ENCODE measurements at regions of chr19 and their contacts with region 1.

Region 1: DNA sequence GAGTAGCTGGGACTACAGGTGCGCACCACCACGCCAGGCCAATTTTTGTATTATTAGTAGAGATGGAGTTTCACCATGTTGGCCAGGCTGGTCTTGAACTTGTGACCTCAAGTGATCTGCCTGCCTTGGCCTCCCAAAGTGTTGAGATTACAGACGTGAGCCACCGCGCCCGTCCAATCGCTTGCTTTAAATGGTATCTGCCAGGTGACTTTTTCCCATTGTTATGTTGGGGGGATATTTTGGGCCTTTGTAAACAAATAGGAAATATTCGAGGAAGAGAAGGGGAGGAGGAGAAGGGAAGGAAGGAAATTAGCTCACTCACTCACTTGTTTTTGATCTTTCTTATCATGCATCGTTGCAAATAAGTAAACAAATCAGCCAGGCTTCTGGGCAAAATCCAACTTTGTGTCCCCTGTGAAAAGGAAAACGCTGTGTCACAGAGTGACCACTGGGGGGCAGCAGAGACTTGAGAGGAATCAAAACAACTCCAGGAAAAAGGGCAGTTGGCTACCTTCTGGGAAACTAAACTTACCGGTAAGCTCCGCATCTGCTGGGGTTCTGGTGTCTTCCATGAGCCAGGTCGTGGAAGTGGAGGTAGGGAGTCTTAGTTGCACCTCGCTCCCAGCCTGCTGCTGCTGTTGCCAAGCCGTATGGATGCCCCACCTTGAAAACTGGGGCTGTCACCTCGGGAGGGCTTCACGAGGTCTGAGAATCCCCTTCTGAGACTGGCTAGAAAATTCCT is 9.3 kb upstream of the RANBP3 start:
- DNase-seq: peak; percentile 41 to 87
- H3K4me3 ChIP-seq: no peak overlapping the region
- H3K27ac ChIP-seq: no peak overlapping the region
- H3K4me1 ChIP-seq: peaks cover 0 to 5% (median 0%) of the 10 kb centered on the region in 4 experiments; a peak in 4 of 7 replicates
- H3K27me3 ChIP-seq: peaks cover 0 to 3% (median 0%) of the 10 kb centered on the region in 4 experiments; a peak in 3 of 7 replicates
- CTCF ChIP-seq: peak; percentile 55 to 88 (median 88)
- EP300 ChIP-seq: no peak
- POLR2A ChIP-seq: no peak
- RAD21 ChIP-seq: peak; percentile 88 to 90

Region 2: DNA sequence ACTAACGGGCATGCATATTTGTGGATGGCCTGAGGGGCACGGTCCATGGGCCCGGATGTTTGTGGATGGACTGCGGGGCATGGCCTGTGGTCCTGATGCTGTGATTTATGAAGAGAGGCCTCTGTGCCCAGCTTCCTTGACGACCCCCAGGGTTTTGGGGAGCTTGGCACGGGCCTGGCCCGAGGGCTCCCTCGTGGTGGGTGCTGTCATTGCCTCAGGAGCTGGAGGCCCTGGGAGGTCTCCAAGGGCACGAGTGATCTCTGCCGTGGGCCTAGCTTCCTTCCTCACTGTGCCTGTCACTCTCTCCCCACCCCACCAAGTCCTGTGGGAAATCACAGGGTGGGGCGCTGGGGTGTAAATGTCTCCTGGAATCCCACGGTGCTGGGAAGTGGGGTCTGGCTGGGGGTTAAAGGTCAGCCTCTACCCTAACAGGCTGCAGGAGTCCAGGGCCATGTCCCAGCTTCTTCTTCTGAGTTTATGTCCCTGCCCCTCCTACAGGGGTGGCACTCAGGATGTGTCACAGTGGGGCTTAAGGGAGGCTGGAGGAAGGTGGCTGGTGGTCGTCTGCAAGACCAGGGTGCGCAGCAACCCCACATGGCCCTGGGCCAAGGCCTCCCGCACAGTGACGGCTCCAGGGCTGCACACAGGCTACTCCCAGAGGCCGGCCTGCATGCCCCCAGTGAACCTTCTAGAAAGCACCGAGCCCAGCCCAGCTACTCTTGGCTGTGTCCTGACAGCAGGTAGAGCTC is 18.2 kb after region 1 on chr19:
- CTCF ChIA-PET with region 1: interaction called, 40 read pairs
- POLR2A ChIA-PET with region 1: interaction called, 4 read pairs
- DNase-seq: no peak
- H3K4me3 ChIP-seq: no peak overlapping the region
- H3K27ac ChIP-seq: no peak overlapping the region
- H3K4me1 ChIP-seq: no peaks in the 10 kb centered on the region; a peak in 1 of 7 replicates
- H3K27me3 ChIP-seq: no peaks in the 10 kb centered on the region
- CTCF ChIP-seq: no peak
- EP300 ChIP-seq: no peak
- POLR2A ChIP-seq: no peak
- RAD21 ChIP-seq: no peak

Region 3: GRCh38 chr19:6038634-6039405 is 51.6 kb after region 1 on chr19:
- CTCF ChIA-PET with region 1: interaction called, 13 read pairs
- POLR2A ChIA-PET with region 1: interaction called, 4 read pairs
- DNase-seq: no peak
- H3K4me3 ChIP-seq: no peak overlapping the region
- H3K27ac ChIP-seq: no peak overlapping the region
- H3K4me1 ChIP-seq: no peaks in the 10 kb centered on the region
- H3K27me3 ChIP-seq: no peaks in the 10 kb centered on the region
- CTCF ChIP-seq: no peak
- EP300 ChIP-seq: no peak
- POLR2A ChIP-seq: no peak
- RAD21 ChIP-seq: no peak

Measured in H1 (cell line).